ENCODE measurements at regions of chr20 and their contacts with region 1.

Region 1: DNA sequence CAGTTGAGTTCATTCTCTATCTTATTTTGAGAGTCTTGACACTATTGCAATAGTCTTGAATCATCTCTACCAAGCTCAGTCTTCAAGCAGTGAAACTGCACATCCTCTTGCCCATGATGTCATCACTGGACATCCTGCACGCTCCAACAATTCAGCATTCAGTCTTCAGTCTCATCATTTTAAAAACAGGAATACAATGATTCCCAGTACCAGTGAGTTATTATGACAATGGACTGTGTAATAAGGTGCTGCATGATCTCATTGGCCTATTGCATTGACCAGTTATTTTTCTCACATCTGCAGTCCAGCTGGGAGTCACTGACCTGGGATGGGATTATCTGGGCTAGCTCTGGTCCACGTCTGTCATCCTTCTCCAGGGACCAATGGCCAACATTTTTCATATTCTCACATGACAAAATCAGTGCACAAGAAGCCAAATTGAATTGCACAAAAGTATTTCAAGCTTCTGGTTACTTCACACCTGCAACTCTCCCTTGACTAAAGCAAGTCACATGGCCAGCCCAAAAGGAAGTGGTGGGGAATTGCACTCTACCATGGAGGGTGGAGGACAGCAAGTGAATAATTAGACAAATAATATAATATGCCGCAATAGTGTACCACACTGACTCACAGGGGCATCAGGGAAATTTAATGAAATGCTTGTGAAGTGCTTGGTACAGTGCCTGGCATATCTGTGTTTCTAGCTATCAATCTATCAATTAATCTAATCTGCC is 6.4 kb upstream of the CST2 start:
- DNase-seq: no peak
- H3K4me3 ChIP-seq: no peak overlapping the region
- H3K27ac ChIP-seq: no peak overlapping the region
- H3K4me1 ChIP-seq: no peaks in the 10 kb centered on the region
- H3K27me3 ChIP-seq: no peaks in the 10 kb centered on the region
- CTCF ChIP-seq: no peak
- POLR2A ChIP-seq: no peak

Region 2: DNA sequence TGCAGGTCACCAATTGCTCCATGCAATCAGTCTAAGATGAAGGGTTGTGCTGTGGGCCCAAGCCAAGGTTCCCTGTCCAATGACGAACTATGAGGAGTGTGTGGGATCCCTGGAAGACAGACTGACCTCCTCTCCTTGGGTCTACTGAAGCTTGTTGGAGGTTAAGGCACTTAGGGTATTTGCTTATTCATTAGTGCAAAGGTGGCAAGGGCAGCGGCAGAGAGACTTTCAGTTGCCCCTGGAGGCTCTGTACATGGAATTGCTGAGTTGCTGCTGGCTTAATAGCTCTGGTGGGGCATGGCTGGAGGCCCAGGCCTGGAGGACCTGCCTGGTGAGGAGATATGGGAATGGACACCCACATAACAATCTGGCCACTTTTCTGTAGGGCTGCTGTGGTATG is 76.4 kb after region 1 on chr20:
- intact Hi-C with region 1: loop called (anchors 10 kb)
- DNase-seq: no peak
- H3K4me3 ChIP-seq: no peak overlapping the region
- H3K27ac ChIP-seq: no peak overlapping the region
- H3K4me1 ChIP-seq: no peaks in the 10 kb centered on the region
- H3K27me3 ChIP-seq: no peaks in the 10 kb centered on the region
- CTCF ChIP-seq: no peak
- POLR2A ChIP-seq: no peak

Region 3: DNA sequence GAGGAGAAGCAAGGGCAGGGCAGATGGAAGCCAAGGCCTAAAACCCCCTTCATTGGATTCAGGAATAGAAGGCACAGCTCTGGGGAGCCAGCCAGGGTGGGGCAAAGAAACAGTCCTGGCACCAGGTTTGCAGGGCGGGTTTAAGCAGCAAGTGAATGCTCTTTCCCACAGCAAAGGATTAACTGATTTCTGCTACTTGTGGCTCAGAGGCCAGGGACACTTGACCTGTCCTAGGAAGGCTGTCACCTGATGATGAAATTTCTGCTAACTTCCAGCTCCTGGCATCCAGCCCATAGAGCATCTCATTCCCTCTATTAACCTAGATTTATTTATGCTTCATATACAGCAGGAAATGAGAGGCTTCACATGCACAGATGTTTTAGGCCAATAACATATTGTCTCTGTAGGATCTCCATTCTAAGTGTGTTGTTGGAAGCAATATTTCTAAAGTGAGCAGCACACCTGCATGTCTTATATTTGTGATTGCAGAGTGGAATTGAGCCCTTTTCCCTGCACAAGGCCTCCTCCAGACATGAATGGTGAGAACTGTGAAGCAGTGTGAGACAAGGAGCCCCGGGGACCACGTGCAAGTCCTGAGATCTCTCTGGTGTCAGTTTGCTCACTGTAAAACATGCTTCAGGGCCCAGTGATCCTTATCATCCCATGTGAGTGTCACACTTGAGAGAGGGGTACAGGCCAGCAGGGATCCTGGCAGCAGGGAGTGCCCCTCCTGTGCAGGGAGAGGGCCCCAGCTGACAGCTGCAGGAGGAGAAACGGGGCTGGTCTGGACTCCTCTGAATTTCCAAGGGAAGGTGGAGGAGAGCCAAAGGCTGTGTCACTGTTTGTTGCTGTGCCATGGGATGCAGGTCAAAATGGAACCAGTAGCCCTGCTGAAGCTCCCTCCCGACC is 87.7 kb after region 1 on chr20:
- intact Hi-C with region 1: no loop called
- DNase-seq: no peak
- H3K4me3 ChIP-seq: no peak overlapping the region
- H3K27ac ChIP-seq: no peak overlapping the region
- H3K4me1 ChIP-seq: no peaks in the 10 kb centered on the region
- H3K27me3 ChIP-seq: no peaks in the 10 kb centered on the region
- CTCF ChIP-seq: no peak
- POLR2A ChIP-seq: no peak

Region 4: GRCh38 chr20:23954008-23954745 is 121.2 kb after region 1 on chr20:
- intact Hi-C with region 1: no loop called
- DNase-seq: no peak
- H3K4me3 ChIP-seq: no peak overlapping the region
- H3K27ac ChIP-seq: no peak overlapping the region
- H3K4me1 ChIP-seq: no peaks in the 10 kb centered on the region
- H3K27me3 ChIP-seq: no peaks in the 10 kb centered on the region
- CTCF ChIP-seq: no peak
- POLR2A ChIP-seq: no peak

Measured in testis (tissue), 5 donors.